ENCODE measurements at regions of chr9 and their contacts with region 1.

Region 1: DNA sequence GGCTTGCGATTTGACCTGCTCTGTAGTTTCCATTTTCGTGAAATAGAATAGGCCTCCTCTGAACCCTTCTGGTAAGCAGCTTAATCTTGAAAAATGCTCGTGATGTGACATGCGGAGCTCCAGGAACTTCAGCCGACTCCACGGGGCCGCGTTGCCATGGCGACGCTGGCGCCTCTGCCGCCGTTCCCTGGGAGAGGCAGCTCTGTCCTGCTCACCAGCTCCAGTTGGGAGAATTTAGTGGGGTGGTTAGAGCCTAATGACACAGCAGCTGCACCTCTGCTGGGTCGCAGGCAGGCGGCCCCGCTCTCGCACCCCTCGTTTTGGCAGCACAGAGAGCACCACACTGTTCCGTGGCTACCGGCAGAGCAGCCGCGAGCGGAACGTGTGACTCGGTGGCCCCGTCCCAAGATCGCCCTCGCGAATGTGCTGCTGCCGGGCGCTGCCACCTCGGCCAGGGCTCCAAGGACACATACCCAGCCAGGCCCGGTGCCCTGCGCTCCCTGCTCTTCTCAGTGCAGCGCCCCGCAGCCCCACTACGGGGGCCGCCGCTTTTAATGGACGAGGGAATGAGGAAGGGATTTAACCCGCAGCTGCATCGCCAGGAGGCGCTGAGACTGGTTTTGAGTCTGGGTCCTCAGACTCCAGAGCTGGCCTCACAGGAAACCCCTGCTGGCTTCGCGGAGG is 131.2 kb upstream of the LMX1B start:
- DNase-seq: no peak
- H3K4me3 ChIP-seq: no peak overlapping the region
- H3K27ac ChIP-seq: no peak overlapping the region
- H3K4me1 ChIP-seq: no peaks in the 10 kb centered on the region
- H3K27me3 ChIP-seq: no peaks in the 10 kb centered on the region
- CTCF ChIP-seq: no peak
- POLR2A ChIP-seq: no peak

Region 2: GRCh38 chr9:126301985-126302603 is 180.4 kb before region 1 on chr9:
- intact Hi-C with region 1: loop called (anchors 10 kb)
- DNase-seq: peak; percentile 54 to 61
- H3K4me3 ChIP-seq: no peak overlapping the region
- H3K27ac ChIP-seq: no peak overlapping the region
- H3K4me1 ChIP-seq: peaks cover 0 to 6% of the 10 kb centered on the region in 2 donors
- H3K27me3 ChIP-seq: no peaks in the 10 kb centered on the region
- CTCF ChIP-seq: peak; percentile 24 to 74 (median 52)
- POLR2A ChIP-seq: no peak

Measured in thyroid gland (tissue), 4 donors.